ENCODE measurements at regions of chr18 and their contacts with region 1.

Region 1: DNA sequence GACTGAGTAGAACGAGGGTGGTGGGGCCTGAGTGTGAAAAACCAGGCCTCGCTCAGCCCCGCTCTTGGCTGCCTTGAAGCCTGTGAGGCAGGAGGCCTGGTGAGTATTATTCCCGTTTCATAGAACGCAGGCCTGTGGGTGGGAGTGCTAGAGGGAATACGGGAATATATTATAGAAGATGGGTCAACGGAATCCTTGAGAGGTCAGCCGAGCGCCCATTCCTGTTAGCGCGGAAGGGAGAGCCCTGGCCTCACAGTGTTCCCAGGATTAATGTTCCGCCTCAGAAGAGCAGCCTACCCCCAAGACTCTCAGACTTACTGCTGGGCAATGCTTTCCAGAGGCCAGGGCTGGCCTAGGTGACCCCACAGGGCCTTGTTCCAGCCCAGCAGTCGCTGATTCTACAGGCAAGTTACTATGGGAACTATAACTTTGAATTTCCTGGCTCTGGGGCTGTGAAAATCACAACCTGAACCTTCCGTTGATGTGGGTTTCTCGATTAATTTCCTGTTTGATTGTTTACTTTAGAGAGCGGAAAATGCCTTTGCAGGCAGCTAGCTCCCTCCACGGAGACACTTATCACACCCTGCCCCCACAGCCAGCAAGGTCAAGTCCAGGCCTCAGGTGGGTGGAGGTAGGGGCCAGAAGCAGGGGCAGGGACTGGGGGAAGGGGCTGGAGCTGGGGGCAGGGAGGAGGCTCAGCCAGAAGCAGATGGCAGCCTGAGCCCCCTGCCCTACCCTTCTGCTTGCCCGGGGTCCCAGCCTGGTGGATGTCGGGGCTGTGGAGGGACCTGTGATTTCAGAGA is 108.3 kb downstream of the SMAD7 start:
- DNase-seq: peak; percentile 42 to 65
- ATAC-seq: peak; percentile 37 to 85 (median 76)
- H3K4me3 ChIP-seq: no peak overlapping the region
- H3K27ac ChIP-seq: peak overlapping the region; percentile 72 to 94 (median 84)
- H3K4me1 ChIP-seq: peaks cover 12 to 78% (median 63%) of the 10 kb centered on the region in 9 donors
- H3K27me3 ChIP-seq: no peaks in the 10 kb centered on the region
- CTCF ChIP-seq: no peak

Region 2: GRCh38 chr18:48790226-48790874 is 52.1 kb before region 1 on chr18:
- intact Hi-C with region 1: loop called in 3 of 10 experiments (anchors 5 to 10 kb)
- DNase-seq: peak; percentile 89 to 93
- ATAC-seq: peak; percentile 72 to 91 (median 89)
- H3K4me3 ChIP-seq: no peak overlapping the region
- H3K27ac ChIP-seq: peak overlapping the region; percentile 68 to 96 (median 92)
- H3K4me1 ChIP-seq: peaks cover 19 to 81% (median 48%) of the 10 kb centered on the region in 9 donors
- H3K27me3 ChIP-seq: no peaks in the 10 kb centered on the region
- CTCF ChIP-seq: no peak

Region 3: DNA sequence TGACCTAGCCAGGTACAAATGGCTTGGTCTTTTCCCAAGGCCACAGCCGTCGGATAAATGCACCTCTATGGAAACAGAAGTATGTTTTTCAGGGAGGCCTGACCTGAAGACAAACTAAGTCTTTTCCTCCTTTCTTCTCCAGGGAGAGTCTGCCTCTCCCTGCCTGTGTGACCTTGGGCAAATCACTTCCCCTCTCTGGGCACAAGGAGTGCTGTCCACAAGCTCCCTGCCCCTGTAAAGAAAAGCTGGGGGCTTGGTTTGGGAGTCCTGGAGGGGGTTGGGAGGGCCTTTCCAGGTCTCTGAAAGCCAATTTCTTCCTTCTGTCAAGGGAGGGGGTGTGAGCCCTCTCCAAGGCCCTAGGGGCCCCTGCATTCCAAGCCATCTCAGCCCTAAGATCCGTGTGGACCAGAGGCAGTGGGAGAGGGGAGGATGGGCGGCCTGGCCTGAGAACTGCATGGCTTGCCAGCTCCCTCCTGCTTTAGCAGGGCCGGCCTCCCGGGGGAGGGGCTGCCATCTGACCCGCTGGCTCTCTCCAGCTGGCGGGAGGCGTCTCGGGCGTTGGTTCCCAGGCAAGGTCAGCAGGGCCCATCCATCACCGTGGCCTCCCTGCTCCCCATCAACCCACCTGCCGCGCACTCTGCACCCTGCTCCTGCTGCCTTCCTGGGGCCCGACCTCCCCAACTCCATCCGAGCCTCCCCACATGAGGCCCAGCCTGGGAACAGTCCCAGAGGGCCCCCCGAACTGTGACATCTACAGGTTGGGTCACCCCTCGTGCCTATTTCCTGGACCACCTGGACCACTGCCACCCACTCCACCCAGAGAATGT is 46.9 kb after region 1 on chr18:
- intact Hi-C with region 1: loop called in 1 of 10 experiments (anchors 5 kb)
- DNase-seq: peak; percentile 55 to 63
- ATAC-seq: peak; percentile 35 to 68 (median 50)
- H3K4me3 ChIP-seq: no peak overlapping the region
- H3K27ac ChIP-seq: no peak overlapping the region
- H3K4me1 ChIP-seq: peaks cover 10 to 44% (median 32%) of the 10 kb centered on the region in 9 donors
- H3K27me3 ChIP-seq: no peaks in the 10 kb centered on the region
- CTCF ChIP-seq: no peak

Region 4: GRCh38 chr18:48940854-48941611 is 98.6 kb after region 1 on chr18:
- intact Hi-C with region 1: loop called in 4 of 10 experiments (anchors 5 kb)
- DNase-seq: no peak
- ATAC-seq: no peak
- H3K4me3 ChIP-seq: peak overlapping the region in 5 of 10 donors; percentile 1 to 94 (median 43)
- H3K27ac ChIP-seq: peak overlapping the region in 9 of 10 donors; percentile 63 to 99 (median 81)
- H3K4me1 ChIP-seq: peaks cover 59 to 99% (median 97%) of the 10 kb centered on the region in 9 donors
- H3K27me3 ChIP-seq: no peaks in the 10 kb centered on the region
- CTCF ChIP-seq: no peak

Measured in heart right ventricle (tissue), 16 donors.